Naive thymus-derived CD4-positive, alpha-beta T cell (primary cell): ENCODE measurements at regions of chr18 and their contacts with region 1.

Region 1: GRCh38 chr18:28692337-28692736 is 515.4 kb upstream of the CDH2 start:
- DNase-seq: no peak
- ATAC-seq: no peak
- H3K4me3 ChIP-seq: no peak overlapping the region
- H3K4me3 Mint-ChIP-seq: no peak overlapping the region
- H3K27ac ChIP-seq: no peak overlapping the region
- H3K27ac Mint-ChIP-seq: no peak overlapping the region
- H3K4me1 ChIP-seq: no peaks in the 10 kb centered on the region
- H3K4me1 Mint-ChIP-seq: no peaks in the 10 kb centered on the region
- H3K27me3 ChIP-seq: no peaks in the 10 kb centered on the region
- H3K27me3 Mint-ChIP-seq: no peaks in the 10 kb centered on the region

Region 2: GRCh38 chr18:28669165-28669564 is 23.2 kb before region 1 on chr18:
- CTCF ChIA-PET with region 1: no interaction called
- POLR2A ChIA-PET with region 1: no interaction called
- intact Hi-C with region 1: no loop called
- DNase-seq: no peak
- ATAC-seq: no peak
- H3K4me3 ChIP-seq: no peak overlapping the region
- H3K4me3 Mint-ChIP-seq: no peak overlapping the region
- H3K27ac ChIP-seq: no peak overlapping the region
- H3K27ac Mint-ChIP-seq: no peak overlapping the region
- H3K4me1 ChIP-seq: no peaks in the 10 kb centered on the region
- H3K4me1 Mint-ChIP-seq: no peaks in the 10 kb centered on the region
- H3K27me3 ChIP-seq: no peaks in the 10 kb centered on the region
- H3K27me3 Mint-ChIP-seq: no peaks in the 10 kb centered on the region

Region 3: GRCh38 chr18:28705482-28705881 is 13.1 kb after region 1 on chr18:
- CTCF ChIA-PET with region 1: no interaction called
- POLR2A ChIA-PET with region 1: no interaction called
- intact Hi-C with region 1: loop called in 1 of 2 experiments (anchors 1 kb)
- DNase-seq: no peak
- ATAC-seq: no peak
- H3K4me3 ChIP-seq: no peak overlapping the region
- H3K4me3 Mint-ChIP-seq: no peak overlapping the region
- H3K27ac ChIP-seq: no peak overlapping the region
- H3K27ac Mint-ChIP-seq: no peak overlapping the region
- H3K4me1 ChIP-seq: no peaks in the 10 kb centered on the region
- H3K4me1 Mint-ChIP-seq: no peaks in the 10 kb centered on the region
- H3K27me3 ChIP-seq: no peaks in the 10 kb centered on the region
- H3K27me3 Mint-ChIP-seq: no peaks in the 10 kb centered on the region